Transverse colon (tissue), 4 donors: ENCODE measurements at regions of chr20 and their contacts with region 1.

Region 1: GRCh38 chr20:21166801-21167200 is 40.9 kb downstream of the KIZ start:
- DNase-seq: no peak
- H3K4me3 ChIP-seq: no peak overlapping the region
- H3K27ac ChIP-seq: no peak overlapping the region
- H3K4me1 ChIP-seq: no peaks in the 10 kb centered on the region
- H3K27me3 ChIP-seq: no peaks in the 10 kb centered on the region
- CTCF ChIP-seq: no peak
- EP300 ChIP-seq: no peak
- POLR2A ChIP-seq: no peak

Region 2: GRCh38 chr20:19347943-19348456 is 1818.8 kb before region 1 on chr20:
- in situ Hi-C with region 1: no loop called
- intact Hi-C with region 1: loop called (anchors 10 kb)
- DNase-seq: no peak
- H3K4me3 ChIP-seq: no peak overlapping the region
- H3K27ac ChIP-seq: no peak overlapping the region
- H3K4me1 ChIP-seq: no peaks in the 10 kb centered on the region
- H3K27me3 ChIP-seq: no peaks in the 10 kb centered on the region
- CTCF ChIP-seq: no peak
- EP300 ChIP-seq: no peak
- POLR2A ChIP-seq: no peak

Region 3: DNA sequence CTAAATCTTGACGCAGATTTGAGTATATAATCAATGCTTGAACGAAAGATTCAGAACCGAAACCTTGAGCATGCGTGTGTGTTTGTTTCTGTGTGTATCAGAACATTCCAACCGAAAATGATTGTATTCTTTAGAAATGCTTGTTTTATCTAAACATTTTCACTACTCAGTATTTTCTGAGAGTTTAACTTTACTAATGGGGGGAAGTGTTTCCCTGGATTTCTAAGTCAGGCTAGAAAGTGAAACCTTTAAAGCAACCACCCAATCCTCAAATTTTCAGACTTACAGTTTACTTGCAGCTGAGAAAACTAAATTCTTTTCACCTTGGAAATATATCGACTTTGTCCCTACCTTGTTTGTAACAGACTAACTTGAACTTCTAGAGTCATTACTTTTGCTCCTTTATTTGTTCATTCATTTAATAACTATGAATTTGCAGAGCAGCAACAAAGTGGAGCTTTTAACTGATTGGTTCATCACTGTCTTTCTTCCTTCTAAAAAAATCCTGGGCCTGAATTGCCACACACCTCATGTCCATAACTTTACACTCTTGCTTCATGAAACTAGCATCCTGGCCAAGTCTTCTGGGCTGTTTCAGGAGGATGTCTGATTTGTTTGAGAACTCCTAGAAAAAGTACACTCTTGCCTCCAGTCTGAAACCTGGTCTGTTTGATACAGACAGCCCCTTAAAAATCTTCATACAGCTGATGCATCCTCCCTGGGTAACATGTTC is 58.6 kb after region 1 on chr20:
- in situ Hi-C with region 1: no loop called
- intact Hi-C with region 1: no loop called
- DNase-seq: no peak
- H3K4me3 ChIP-seq: no peak overlapping the region
- H3K27ac ChIP-seq: peak overlapping the region in 3 of 4 donors; percentile 1 to 46 (median 10)
- H3K4me1 ChIP-seq: peaks cover 0 to 3% (median 0%) of the 10 kb centered on the region in 4 donors
- H3K27me3 ChIP-seq: no peaks in the 10 kb centered on the region
- CTCF ChIP-seq: no peak
- EP300 ChIP-seq: no peak
- POLR2A ChIP-seq: no peak